ENCODE measurements at regions of chr2 and their contacts with region 1.

Region 1: GRCh38 chr2:8544786-8545694 is 136.8 kb upstream of the ID2 start:
- DNase-seq: peak; percentile 84
- H3K4me3 Mint-ChIP-seq: no peak overlapping the region
- H3K27ac Mint-ChIP-seq: peak overlapping the region; percentile 99
- H3K4me1 Mint-ChIP-seq: peaks cover 80% of the 10 kb centered on the region
- H3K27me3 Mint-ChIP-seq: no peaks in the 10 kb centered on the region

Region 2: DNA sequence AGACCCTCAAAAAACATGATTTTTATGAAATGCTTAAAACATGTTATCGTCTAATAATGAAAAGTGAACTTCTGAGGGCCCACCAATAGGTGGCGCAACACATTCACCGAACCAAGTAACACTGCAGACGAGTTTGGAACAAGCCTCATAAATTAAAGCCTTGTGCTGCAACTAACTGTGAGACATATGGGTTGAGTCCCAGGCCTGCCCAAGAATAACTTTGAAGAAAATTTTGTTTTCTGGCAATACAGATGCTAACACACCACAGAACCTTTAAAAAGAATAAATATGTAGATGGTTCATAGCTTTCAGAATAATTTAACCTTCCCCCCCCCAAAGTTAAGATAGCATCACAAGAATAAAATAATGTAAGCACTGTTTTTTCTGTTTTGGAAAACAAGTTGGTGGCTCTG is 1342.0 kb before region 1 on chr2:
- intact Hi-C with region 1: loop called (anchors 10 kb)
- DNase-seq: peak; percentile 48
- H3K4me3 Mint-ChIP-seq: no peak overlapping the region
- H3K27ac Mint-ChIP-seq: no peak overlapping the region
- H3K4me1 Mint-ChIP-seq: peaks cover 7% of the 10 kb centered on the region
- H3K27me3 Mint-ChIP-seq: peaks cover 2% of the 10 kb centered on the region

Region 3: DNA sequence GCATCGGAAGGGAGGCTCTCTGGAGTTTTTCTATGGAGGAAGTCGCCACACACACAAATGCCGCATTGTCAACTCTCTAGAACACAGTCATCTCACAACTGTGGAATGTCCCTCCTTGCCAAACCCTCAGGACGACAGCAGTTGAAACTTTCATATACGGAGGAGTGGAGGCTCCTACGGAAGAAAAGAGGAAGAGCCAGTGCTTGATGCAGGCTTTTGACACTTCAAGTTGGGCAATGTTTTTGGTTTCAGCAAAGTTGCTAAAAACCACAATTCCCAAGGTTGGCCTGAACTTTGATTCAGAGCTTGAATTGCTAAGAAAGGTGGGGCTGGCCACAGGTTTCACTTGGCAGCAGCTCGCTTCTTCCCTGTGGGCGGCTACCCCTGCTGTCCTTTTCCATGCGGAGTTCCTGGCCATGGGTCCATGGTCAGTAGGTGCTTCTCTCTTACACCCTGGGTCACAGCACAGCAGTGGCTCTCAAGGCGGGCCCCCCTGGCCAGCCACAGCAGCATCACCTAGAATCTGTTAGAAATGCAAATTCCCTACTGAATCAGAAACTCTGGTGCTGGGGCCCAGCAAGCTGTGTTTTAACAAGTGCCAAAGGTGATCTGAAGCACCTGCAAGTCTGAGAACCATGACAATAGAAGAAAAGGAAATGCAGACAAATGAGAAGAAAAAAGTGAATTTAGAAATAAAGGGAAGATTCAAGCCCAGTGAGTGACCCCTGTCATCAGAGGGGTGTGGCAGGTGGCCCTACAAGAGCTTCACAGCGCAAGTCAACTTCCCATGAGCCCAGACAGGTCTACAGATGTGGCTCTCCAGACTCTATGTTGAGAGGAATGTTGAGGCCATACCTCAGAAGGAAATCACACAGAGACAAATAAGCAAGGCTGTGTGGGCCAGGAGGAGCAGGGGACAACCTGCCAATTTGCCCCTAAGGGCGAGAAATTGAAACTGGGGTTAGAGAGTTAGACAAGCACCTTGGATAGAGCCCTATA is 771.4 kb before region 1 on chr2:
- intact Hi-C with region 1: loop called (anchors 1 kb)
- DNase-seq: peak; percentile 26
- H3K4me3 Mint-ChIP-seq: peak overlapping the region; percentile 31
- H3K27ac Mint-ChIP-seq: peak overlapping the region; percentile 91
- H3K4me1 Mint-ChIP-seq: peaks cover 58% of the 10 kb centered on the region
- H3K27me3 Mint-ChIP-seq: no peaks in the 10 kb centered on the region

Region 4: GRCh38 chr2:7984693-7985353 is 560.2 kb before region 1 on chr2:
- intact Hi-C with region 1: loop called (anchors 5 kb)
- DNase-seq: no peak
- H3K4me3 Mint-ChIP-seq: no peak overlapping the region
- H3K27ac Mint-ChIP-seq: peak overlapping the region; percentile 89
- H3K4me1 Mint-ChIP-seq: peaks cover 32% of the 10 kb centered on the region
- H3K27me3 Mint-ChIP-seq: no peaks in the 10 kb centered on the region

Region 5: DNA sequence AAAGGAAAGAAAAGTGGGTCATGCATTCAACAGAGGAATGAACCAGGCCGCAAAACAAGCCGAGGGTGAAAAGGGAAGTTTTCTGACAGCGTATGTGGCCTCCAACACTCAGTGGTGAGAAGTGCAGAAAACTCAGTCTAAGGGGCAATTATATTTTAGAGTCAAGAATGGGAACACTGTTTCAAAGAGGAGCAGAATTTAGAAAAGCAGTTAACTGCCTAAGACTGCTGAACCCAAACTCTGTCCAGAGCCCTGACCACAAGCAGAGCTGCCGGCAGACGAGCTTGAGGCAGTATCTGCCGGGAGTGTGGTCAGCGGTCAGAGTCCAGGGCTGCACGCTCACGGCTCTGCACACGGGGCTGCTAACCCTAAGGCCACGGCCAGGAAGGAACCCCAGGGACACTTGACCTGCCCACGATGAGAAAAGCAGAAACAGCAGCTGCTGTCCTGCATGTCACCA is 210.1 kb before region 1 on chr2:
- intact Hi-C with region 1: loop called (anchors 5 kb)
- DNase-seq: no peak
- H3K4me3 Mint-ChIP-seq: no peak overlapping the region
- H3K27ac Mint-ChIP-seq: no peak overlapping the region
- H3K4me1 Mint-ChIP-seq: peaks cover 16% of the 10 kb centered on the region
- H3K27me3 Mint-ChIP-seq: peaks cover 24% of the 10 kb centered on the region

Region 6: DNA sequence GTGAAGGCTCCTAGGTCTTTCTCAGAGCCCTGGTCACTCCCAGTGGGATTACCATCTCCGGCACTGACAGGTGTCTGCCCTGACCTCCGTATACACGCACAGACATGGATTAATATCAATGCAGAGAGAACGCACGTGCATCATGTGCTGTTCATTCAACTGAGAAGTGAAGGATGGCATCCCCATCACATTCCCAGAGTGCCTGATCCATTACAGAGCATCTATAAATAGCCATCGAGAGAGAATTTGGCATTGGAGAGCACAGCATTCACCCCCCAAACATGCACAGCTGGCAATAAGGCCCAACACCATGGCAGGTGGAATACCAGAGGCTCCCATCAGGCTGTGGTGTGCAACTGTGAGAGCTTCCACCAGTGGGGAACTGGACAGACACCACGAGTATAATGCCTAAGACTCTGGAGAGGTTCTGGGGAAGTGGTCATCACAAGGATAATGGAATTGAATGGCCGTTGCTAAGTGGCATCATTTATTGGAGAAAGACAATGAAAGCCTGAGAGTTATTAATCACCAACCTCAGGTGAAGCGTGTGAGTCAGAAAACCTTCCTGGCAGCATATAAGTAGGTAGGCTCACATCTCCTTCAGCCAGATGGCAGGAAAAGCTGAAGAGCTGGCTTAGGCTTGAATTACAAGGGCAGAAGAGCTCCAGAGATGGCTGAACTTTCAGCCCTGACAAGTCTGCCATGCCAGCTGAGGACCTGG is 107.7 kb before region 1 on chr2:
- intact Hi-C with region 1: no loop called
- DNase-seq: no peak
- H3K4me3 Mint-ChIP-seq: no peak overlapping the region
- H3K27ac Mint-ChIP-seq: no peak overlapping the region
- H3K4me1 Mint-ChIP-seq: peaks cover 29% of the 10 kb centered on the region
- H3K27me3 Mint-ChIP-seq: peaks cover 7% of the 10 kb centered on the region

Region 7: GRCh38 chr2:8475349-8476031 is 69.5 kb before region 1 on chr2:
- intact Hi-C with region 1: no loop called
- DNase-seq: no peak
- H3K4me3 Mint-ChIP-seq: no peak overlapping the region
- H3K27ac Mint-ChIP-seq: peak overlapping the region; percentile 74
- H3K4me1 Mint-ChIP-seq: peaks cover 79% of the 10 kb centered on the region
- H3K27me3 Mint-ChIP-seq: no peaks in the 10 kb centered on the region

Region 8: DNA sequence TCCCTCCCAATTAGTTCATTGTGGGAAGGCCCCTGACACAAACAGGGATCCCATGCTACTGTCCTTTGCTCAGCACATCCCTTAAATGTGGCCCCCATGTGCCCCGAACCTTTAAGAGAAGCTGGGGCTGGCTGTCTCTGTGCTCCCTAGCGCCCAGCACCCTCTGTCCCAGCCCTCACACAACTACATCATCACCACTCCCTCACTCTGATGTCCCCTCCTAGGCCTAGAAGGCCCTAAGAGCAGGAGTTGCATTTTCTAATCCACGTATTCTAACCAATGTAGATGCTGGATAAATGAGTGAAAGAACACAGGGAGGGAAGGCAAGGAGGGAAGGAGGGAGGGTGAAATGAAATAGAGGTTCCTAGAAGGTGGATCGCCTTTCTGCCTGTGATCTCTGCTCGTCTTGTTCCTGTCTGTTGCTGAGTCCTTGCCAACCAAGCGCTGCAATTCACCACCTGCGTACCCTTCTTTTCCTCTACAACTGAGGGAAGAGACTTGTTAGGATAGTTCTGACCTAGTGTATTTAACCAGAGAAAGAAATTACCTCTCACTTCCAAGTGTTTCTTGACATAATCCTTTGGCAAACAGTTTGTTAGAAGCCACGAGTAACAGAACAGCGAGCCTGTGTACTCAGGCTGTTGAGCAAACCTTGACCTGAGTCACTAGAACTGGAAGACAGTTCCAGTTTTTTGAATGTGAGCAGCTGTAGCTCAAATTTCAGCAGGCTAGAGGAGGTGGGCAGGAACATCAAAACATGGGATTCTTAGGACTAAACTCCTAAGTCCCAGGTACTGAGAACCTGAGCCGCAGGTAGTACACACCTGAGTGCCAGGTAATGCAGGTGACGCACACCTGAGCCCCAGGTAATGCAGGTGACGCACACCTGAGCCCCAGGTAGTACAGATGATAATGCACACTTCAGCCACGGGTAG is 44.6 kb before region 1 on chr2:
- intact Hi-C with region 1: no loop called
- DNase-seq: no peak
- H3K4me3 Mint-ChIP-seq: no peak overlapping the region
- H3K27ac Mint-ChIP-seq: no peak overlapping the region
- H3K4me1 Mint-ChIP-seq: peaks cover 14% of the 10 kb centered on the region
- H3K27me3 Mint-ChIP-seq: no peaks in the 10 kb centered on the region

Region 9: GRCh38 chr2:8514796-8515758 is 30.0 kb before region 1 on chr2:
- intact Hi-C with region 1: loop called (anchors 1 kb)
- DNase-seq: peak; percentile 58
- H3K4me3 Mint-ChIP-seq: peak overlapping the region; percentile 45
- H3K27ac Mint-ChIP-seq: peak overlapping the region; percentile 97
- H3K4me1 Mint-ChIP-seq: peaks cover 60% of the 10 kb centered on the region
- H3K27me3 Mint-ChIP-seq: no peaks in the 10 kb centered on the region

Region 10: GRCh38 chr2:8600456-8600855 is 55.4 kb after region 1 on chr2:
- intact Hi-C with region 1: no loop called
- DNase-seq: no peak
- H3K4me3 Mint-ChIP-seq: no peak overlapping the region
- H3K27ac Mint-ChIP-seq: no peak overlapping the region
- H3K4me1 Mint-ChIP-seq: peaks cover 9% of the 10 kb centered on the region
- H3K27me3 Mint-ChIP-seq: peaks cover 10% of the 10 kb centered on the region

Measured in activated T-helper 2 cell treated with anti-CD3 and anti-CD28 coated beads, Interferon-gamma antibody, Interleukin-2, Interleukin-4, amounts not matched to agents 10 μg/mL and 5 μg/mL and 100 μg/mL, durations not matched to agents 14 hours and 24 hours and 36 hours (primary cell).